ENCODE measurements at regions of chr1 and their contacts with region 1.

Region 1: GRCh38 chr1:226062558-226063223 is at the start of gene H3-3A:
- DNase-seq: peak; percentile 99
- H3K4me3 ChIP-seq: peak within 1 kb of the TSS; percentile 60 to 91 (median 84)
- H3K27ac ChIP-seq: peak within 1 kb of the TSS; percentile 97 to 100 (median 98)
- H3K4me1 ChIP-seq: peaks cover 0 to 48% (median 42%) of the 10 kb centered on the region in 4 donors
- H3K27me3 ChIP-seq: no peaks in the 10 kb centered on the region
- CTCF ChIP-seq: peak in 1 of 4 experiments; percentile 14
- EP300 ChIP-seq: no peak
- POLR2A ChIP-seq: peak; percentile 94 to 95
- total RNA-seq, gene H3-3A: 320 to 452 (median 393) TPM

Region 2: DNA sequence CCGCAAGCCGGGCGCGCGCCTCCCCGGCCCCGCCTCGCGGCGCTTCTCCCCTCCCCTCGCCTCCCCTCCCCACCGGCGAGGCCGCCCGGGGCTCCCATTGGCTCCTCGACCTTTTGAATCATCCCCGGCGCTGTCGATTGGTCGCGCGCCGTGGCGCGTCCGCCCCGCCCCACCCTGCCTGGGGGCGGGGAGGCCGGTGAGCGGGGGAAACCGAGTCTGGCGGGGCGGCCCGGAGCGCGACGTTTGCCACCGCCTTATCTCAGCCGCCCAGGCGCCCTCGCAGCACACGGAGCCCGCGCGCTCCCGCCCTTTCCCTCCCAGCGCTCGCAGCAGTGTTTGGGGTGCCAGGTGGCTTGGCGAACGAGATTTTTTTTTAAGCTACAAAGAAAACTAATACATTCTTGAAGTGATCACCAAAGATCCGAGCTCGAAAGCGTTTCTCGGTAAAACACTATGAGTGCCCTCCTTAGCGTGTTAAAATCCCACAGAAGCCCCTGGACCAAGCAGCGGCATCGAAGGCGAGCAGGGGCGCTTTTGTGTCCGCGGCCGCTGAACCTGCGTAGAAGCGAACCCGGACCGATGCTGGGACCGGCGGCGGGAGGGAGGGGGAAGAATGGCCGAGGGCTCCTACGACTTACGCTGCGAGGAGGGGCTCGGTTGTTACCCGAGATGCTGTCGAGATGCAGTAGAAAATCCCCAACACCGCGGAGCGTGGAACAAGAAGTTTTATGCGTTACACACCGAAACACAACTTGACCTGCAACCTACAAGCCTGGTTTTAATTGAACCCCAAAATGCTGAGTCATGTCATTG is 634.4 kb before region 1 on chr1:
- intact Hi-C with region 1: loop called (anchors 10 kb)
- DNase-seq: peak; percentile 97
- H3K4me3 ChIP-seq: peak overlapping the region; percentile 89 to 100 (median 94)
- H3K27ac ChIP-seq: peak overlapping the region; percentile 95 to 100 (median 98)
- H3K4me1 ChIP-seq: peaks cover 0 to 40% (median 32%) of the 10 kb centered on the region in 4 donors
- H3K27me3 ChIP-seq: no peaks in the 10 kb centered on the region
- CTCF ChIP-seq: no peak
- EP300 ChIP-seq: peak in 1 of 4 donors; percentile 2
- POLR2A ChIP-seq: peak; percentile 83 to 86

Region 3: DNA sequence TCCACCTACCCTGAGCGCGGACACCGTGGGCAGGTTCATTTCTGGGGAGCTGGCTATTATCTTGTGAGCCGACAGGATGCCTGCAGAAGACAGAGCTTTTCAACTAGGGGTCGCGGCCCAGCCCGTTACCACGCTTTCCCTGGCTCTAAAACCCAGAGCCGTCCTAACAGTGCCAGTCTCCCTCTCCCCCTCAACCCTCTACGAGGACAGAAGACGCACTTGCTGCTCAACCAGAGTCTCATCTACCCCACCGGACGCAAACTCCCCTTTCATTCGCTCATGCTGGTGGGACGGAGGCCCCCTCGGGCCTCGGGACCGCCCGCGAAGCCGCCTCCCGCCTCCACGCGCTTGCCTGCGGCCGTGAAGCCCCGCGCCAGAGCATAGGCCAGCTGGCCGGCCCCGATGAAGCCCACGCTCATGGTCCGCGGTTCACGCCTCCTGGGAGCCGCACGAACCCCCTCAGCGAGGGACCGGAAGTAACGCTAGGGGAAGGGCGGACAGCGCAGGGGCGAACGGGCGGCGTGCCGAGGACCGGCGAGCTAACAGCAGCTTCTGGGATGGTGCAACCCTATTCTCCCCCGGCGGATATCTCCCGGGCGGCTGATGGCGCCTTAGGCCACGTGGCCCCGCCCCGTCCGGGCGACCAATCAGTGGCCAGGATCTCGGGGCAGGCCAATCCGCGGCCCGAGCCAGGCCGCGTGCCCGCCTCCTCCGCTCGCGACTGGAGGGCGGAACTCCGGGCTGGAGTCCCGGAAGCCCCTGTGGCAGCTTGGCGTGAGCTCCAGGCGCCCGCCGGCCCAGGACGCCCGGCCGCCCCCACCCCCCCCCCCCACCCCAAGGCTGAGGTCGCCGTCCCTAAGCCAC is 138.8 kb before region 1 on chr1 and contains the start of gene PYCR2:
- intact Hi-C with region 1: loop called (anchors 5 kb)
- DNase-seq: peak; percentile 98
- H3K4me3 ChIP-seq: peak within 1 kb of the TSS; percentile 72 to 96 (median 79)
- H3K27ac ChIP-seq: peak within 1 kb of the TSS; percentile 90 to 96 (median 93)
- H3K4me1 ChIP-seq: peaks cover 0 to 37% (median 34%) of the 10 kb centered on the region in 4 donors
- H3K27me3 ChIP-seq: no peaks in the 10 kb centered on the region
- CTCF ChIP-seq: no peak
- EP300 ChIP-seq: no peak
- POLR2A ChIP-seq: peak; percentile 73
- total RNA-seq, gene PYCR2: 31.0 to 40.5 (median 34.0) TPM

Region 4: DNA sequence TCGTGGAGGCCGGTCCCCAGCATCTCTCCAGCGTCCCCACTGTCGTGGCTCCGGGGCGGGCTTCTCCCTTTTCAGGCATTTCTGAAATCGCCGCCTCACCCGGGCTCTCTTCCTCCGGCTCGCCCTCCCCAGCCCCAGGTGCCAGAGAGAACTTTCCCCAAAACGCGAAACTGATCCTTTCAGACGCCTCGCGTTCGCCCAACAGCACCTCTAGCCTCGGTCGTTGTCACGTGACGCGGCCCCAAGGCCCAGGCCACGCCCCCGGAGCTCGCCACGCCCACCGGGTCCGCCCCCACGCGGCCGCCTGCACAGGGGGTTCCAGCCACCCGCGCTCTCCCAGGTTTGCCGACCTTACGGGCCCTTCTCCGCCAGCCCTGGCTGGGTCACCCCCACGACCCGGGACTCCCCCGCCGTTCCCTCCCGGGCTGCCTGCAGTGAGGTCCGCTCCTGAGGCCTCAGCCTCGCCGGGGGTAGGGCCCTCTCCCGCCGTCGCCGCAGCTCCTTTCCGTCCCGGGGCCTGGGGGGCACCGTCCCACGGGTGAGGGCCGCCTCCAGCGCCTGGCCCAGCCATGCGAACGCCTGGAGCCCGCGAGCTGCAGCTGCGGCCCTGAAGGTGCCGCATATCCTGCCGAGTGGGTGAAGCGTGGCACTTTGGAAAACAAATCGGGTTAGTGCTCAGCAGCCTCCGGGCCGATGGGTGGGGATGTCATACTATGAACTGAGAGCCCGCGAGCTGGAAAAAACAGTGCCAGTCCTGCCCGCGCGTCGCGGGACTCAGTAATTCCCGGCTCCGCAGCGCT is 20.8 kb after region 1 on chr1:
- intact Hi-C with region 1: loop called (anchors 2 kb)
- DNase-seq: peak; percentile 94
- H3K4me3 ChIP-seq: peak overlapping the region; percentile 40 to 76 (median 58)
- H3K27ac ChIP-seq: peak overlapping the region; percentile 75 to 84 (median 77)
- H3K4me1 ChIP-seq: peaks cover 0 to 13% (median 12%) of the 10 kb centered on the region in 4 donors
- H3K27me3 ChIP-seq: no peaks in the 10 kb centered on the region
- CTCF ChIP-seq: no peak
- EP300 ChIP-seq: no peak
- POLR2A ChIP-seq: peak in 1 of 2 donors; percentile 20

Region 5: GRCh38 chr1:226121587-226122400 is 59.1 kb after region 1 on chr1:
- intact Hi-C with region 1: loop called (anchors 1 kb)
- DNase-seq: no peak
- H3K4me3 ChIP-seq: peak overlapping the region; percentile 43 to 77 (median 71)
- H3K27ac ChIP-seq: peak overlapping the region; percentile 62 to 74 (median 69)
- H3K4me1 ChIP-seq: peaks cover 0 to 19% (median 12%) of the 10 kb centered on the region in 4 donors
- H3K27me3 ChIP-seq: no peaks in the 10 kb centered on the region
- CTCF ChIP-seq: peak; percentile 29 to 77 (median 59)
- EP300 ChIP-seq: no peak
- POLR2A ChIP-seq: no peak